A673 (cell line): ENCODE measurements at regions of chr4 and their contacts with region 1.

Region 1: GRCh38 chr4:114386637-114387233 is 211.9 kb upstream of the UGT8 start:
- DNase-seq: peak; percentile 49
- H3K4me3 ChIP-seq: no peak overlapping the region
- H3K27ac ChIP-seq: no peak overlapping the region
- H3K4me1 ChIP-seq: peaks cover 6% of the 10 kb centered on the region
- H3K27me3 ChIP-seq: no peaks in the 10 kb centered on the region
- CTCF ChIP-seq: peak; percentile 81

Region 2: DNA sequence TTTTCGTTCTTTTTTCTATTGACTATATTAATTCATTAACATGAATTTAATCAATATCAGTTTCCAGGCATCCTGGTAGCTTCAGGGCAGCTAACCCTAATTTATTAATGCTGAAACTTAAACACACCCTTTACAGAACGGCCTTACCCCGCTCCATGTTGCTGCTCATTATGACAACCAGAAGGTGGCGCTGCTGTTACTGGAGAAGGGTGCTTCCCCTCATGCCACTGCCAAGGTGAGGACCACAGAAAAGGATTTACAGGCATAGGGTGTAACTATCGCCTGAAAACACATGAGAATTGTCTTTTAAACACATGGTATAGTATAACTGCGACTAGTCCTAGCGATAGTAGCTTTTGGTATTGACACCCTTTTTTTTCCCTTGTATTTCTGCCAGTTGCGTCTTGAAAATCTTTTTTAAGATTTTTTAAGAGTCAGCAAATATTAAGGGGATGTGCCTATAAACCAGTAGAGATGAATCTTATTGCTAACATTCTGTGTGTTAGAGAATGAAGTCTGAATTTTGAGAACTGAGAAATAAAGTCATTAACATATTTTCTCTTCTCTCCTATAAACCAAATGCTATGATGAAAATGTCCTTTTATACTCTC is 1108.3 kb before region 1 on chr4:
- CTCF ChIA-PET with region 1: no interaction called
- POLR2A ChIA-PET with region 1: no interaction called
- intact Hi-C with region 1: loop called (anchors 5 kb)
- DNase-seq: peak; percentile 88
- H3K4me3 ChIP-seq: no peak overlapping the region
- H3K27ac ChIP-seq: no peak overlapping the region
- H3K4me1 ChIP-seq: no peaks in the 10 kb centered on the region
- H3K27me3 ChIP-seq: no peaks in the 10 kb centered on the region
- CTCF ChIP-seq: peak; percentile 95

Region 3: GRCh38 chr4:113547487-113548042 is 839.2 kb before region 1 on chr4:
- CTCF ChIA-PET with region 1: no interaction called
- POLR2A ChIA-PET with region 1: no interaction called
- intact Hi-C with region 1: loop called (anchors 10 kb)
- DNase-seq: peak; percentile 92
- H3K4me3 ChIP-seq: no peak overlapping the region
- H3K27ac ChIP-seq: no peak overlapping the region
- H3K4me1 ChIP-seq: peaks cover 3% of the 10 kb centered on the region
- H3K27me3 ChIP-seq: no peaks in the 10 kb centered on the region
- CTCF ChIP-seq: peak; percentile 97

Region 4: DNA sequence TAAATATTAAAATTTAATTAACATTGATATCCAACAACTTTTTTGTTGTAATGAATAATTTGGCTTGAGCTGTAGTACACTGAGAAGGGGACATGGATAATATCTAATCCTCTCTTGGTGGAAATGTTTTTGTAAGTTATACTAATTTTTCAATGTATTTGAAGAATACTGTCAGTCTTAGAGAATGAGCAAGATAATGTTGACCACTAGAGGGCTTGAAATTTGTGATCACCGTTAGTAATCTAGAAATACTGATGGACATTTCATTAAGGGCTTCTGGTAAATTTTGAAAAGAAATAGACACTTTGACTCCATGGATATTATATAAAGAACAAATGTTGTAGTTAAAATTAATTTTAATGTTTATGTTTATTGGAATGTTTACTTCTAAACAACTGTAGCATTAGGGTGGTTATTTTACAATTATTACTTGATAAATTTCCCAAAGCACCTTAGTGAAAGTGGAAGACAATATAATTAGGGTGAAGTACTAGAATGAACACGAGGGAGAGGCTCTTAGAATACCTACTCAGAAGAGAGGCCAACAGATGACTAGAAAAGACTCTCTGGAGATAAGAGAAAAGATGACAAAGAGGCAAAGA is 605.2 kb before region 1 on chr4:
- CTCF ChIA-PET with region 1: no interaction called
- POLR2A ChIA-PET with region 1: no interaction called
- intact Hi-C with region 1: loop called (anchors 5 kb)
- DNase-seq: peak; percentile 56
- H3K4me3 ChIP-seq: no peak overlapping the region
- H3K27ac ChIP-seq: no peak overlapping the region
- H3K4me1 ChIP-seq: peaks cover 7% of the 10 kb centered on the region
- H3K27me3 ChIP-seq: no peaks in the 10 kb centered on the region
- CTCF ChIP-seq: peak; percentile 78

Region 5: DNA sequence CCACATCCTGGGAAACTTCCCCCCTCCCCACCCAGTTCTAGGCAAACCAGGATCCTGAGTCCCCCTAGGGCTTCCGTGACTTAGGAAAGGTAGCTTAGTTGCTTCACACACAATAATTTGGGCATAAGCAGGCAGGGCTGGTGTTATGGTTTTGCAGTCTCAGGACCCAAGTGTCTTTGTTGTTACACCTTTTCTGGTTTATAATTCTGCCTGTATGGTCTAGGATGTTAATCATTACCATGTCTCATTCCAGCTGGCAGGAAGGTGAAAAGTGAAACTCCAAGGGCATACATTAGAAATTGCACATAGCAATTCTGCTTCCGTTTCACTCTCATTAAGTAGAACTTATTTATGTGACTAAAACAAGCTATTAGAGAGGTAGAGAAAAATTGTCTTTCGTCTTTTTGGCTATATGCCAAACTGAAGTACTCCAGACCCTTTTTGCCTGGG is 228.7 kb after region 1 on chr4:
- CTCF ChIA-PET with region 1: no interaction called
- POLR2A ChIA-PET with region 1: no interaction called
- intact Hi-C with region 1: no loop called
- DNase-seq: no peak
- H3K4me3 ChIP-seq: no peak overlapping the region
- H3K27ac ChIP-seq: no peak overlapping the region
- H3K4me1 ChIP-seq: no peaks in the 10 kb centered on the region
- H3K27me3 ChIP-seq: peaks cover 8% of the 10 kb centered on the region
- CTCF ChIP-seq: no peak

Region 6: DNA sequence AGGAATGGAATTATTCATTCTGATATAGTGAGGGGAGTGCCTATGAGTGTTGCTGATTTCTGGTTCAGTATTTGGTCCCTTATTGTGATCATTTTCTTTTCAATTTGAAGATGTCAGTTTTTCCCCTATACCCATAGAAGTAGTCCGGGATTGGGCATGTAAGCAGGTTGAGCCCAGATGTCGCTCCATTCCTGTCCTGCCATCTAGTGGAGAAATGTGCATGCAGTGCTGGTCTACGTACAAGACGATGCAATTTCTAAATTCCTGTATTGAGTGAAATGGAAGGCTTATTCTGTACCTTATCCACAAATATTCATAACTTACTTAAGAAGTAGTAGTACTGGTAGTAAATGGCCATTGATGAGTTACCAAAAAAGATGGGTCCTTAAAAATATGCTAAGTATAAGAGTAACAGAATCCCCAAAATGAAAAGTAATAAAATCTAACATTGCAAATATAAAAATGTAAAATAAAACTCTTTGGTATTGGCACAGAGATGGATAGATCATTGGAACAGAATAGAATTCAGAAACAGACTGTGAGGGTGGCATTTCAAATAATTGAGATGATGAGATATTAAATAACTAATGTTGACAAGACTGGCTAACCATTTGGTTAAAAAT is 272.8 kb after region 1 on chr4:
- CTCF ChIA-PET with region 1: interaction called, 3 read pairs
- POLR2A ChIA-PET with region 1: no interaction called
- intact Hi-C with region 1: loop called (anchors 1 kb)
- DNase-seq: peak; percentile 79
- H3K4me3 ChIP-seq: no peak overlapping the region
- H3K27ac ChIP-seq: no peak overlapping the region
- H3K4me1 ChIP-seq: no peaks in the 10 kb centered on the region
- H3K27me3 ChIP-seq: no peaks in the 10 kb centered on the region
- CTCF ChIP-seq: peak; percentile 92

Region 7: GRCh38 chr4:115113125-115114106 is 726.7 kb after region 1 on chr4 and contains the start of gene NDST4:
- CTCF ChIA-PET with region 1: no interaction called
- POLR2A ChIA-PET with region 1: no interaction called
- intact Hi-C with region 1: loop called (anchors 5 kb)
- DNase-seq: peak; percentile 98
- H3K4me3 ChIP-seq: peak within 1 kb of the TSS; percentile 56
- H3K27ac ChIP-seq: peak within 1 kb of the TSS; percentile 81
- H3K4me1 ChIP-seq: peaks cover 22% of the 10 kb centered on the region
- H3K27me3 ChIP-seq: no peaks in the 10 kb centered on the region
- CTCF ChIP-seq: no peak
- total RNA-seq, gene NDST4: 32.8 and 38.9 TPM in 2 replicates